ENCODE measurements at regions of chr4 and their contacts with region 1.

Region 1: DNA sequence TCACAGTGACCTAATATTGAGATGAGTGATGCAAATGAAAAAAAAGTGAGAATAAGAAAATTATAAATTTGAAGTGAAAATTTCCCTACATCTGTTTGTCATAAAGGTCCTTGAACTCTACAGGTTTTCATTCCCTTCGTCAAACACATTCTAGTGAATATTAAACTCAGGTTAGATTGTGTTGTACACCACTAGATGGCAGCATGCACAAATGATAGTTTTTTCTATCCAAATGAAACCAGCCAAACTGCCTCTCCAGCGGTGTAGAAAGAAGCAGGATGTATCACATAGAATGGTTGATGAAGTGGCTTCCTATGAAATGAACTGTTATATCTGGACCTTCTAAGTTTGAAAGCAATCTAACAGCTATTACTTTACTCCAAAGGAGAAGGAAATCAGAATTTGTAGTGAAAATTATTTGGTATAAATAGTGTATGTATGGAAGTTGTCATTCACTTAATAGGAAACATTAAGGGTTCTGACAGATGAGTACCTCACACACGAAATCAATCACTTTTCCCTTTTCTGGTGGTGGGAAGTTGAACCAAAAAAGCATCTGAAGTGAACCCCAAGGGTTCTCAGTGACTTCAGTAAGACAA is 382.7 kb downstream of the UNC5C start:
- DNase-seq: peak; percentile 17
- ATAC-seq: peak; percentile 82
- H3K4me3 ChIP-seq: no peak overlapping the region
- H3K27ac ChIP-seq: no peak overlapping the region
- H3K4me1 ChIP-seq: no peaks in the 10 kb centered on the region
- H3K27me3 ChIP-seq: no peaks in the 10 kb centered on the region
- CTCF ChIP-seq: peak; percentile 44 to 79 (median 50); a peak in 5 of 6 replicates
- EP300 ChIP-seq: no peak
- POLR2A ChIP-seq: no peak
- RAD21 ChIP-seq: peak; percentile 74

Region 2: GRCh38 chr4:94595879-94596483 is 570.0 kb before region 1 on chr4:
- CTCF ChIA-PET with region 1: no interaction called
- POLR2A ChIA-PET with region 1: no interaction called
- RAD21 ChIA-PET with region 1: no interaction called
- SMC1A ChIA-PET with region 1: no interaction called
- in situ Hi-C with region 1: no loop called
- intact Hi-C with region 1: no loop called
- DNase-seq: peak; percentile 8
- ATAC-seq: peak; percentile 78
- H3K4me3 ChIP-seq: no peak overlapping the region
- H3K27ac ChIP-seq: no peak overlapping the region
- H3K4me1 ChIP-seq: no peaks in the 10 kb centered on the region
- H3K27me3 ChIP-seq: no peaks in the 10 kb centered on the region
- CTCF ChIP-seq: peak; percentile 45 to 76 (median 53); a peak in 4 of 6 replicates
- EP300 ChIP-seq: no peak
- POLR2A ChIP-seq: no peak
- RAD21 ChIP-seq: peak; percentile 89

Region 3: DNA sequence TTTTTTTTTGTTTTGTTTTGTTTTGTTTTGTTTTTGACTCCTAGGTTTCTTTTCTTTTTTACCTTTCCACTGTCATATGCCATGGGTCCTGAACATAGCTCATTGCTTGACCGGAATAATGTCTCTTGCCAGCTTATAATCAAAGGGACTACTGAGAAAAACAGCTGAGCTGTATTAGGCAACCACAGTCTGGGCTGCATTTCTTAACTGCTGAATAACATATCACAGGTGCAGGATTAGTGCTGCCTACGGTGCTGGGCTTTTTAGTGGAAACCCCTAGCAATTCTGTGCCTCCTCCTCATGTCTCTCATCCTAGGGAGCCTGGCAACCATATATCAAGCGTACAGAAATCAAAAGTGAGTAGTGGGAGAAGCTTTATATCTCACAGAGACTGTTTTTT is 74.8 kb before region 1 on chr4:
- CTCF ChIA-PET with region 1: no interaction called
- POLR2A ChIA-PET with region 1: no interaction called
- RAD21 ChIA-PET with region 1: no interaction called
- SMC1A ChIA-PET with region 1: no interaction called
- in situ Hi-C with region 1: no loop called
- intact Hi-C with region 1: no loop called
- DNase-seq: no peak
- ATAC-seq: no peak
- H3K4me3 ChIP-seq: no peak overlapping the region
- H3K27ac ChIP-seq: no peak overlapping the region
- H3K4me1 ChIP-seq: no peaks in the 10 kb centered on the region
- H3K27me3 ChIP-seq: no peaks in the 10 kb centered on the region
- CTCF ChIP-seq: no peak
- EP300 ChIP-seq: no peak
- POLR2A ChIP-seq: no peak
- RAD21 ChIP-seq: no peak

Region 4: DNA sequence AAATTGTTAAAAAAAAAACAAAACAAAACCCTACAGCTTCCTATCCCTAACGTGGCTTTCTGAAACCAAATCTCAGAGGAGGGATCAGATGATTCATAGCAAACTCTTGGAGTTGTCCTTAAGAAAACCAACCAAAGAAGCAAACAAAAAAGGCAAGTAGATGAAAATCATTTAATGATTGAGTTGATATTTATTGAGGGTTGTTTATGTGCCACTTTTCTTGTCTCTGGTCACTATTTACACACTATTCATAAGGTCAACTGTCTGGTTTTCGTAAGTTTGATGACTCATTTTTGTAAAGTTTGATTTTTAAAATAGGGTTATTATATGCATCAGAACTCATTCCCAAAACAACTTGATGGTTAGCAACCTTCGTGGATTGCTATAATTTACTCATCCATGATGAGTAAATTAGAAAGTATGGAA is 249.3 kb after region 1 on chr4:
- CTCF ChIA-PET with region 1: no interaction called
- POLR2A ChIA-PET with region 1: no interaction called
- RAD21 ChIA-PET with region 1: no interaction called
- SMC1A ChIA-PET with region 1: no interaction called
- in situ Hi-C with region 1: no loop called
- intact Hi-C with region 1: loop called (anchors 5 kb)
- DNase-seq: no peak
- ATAC-seq: no peak
- H3K4me3 ChIP-seq: no peak overlapping the region
- H3K27ac ChIP-seq: no peak overlapping the region
- H3K4me1 ChIP-seq: no peaks in the 10 kb centered on the region
- H3K27me3 ChIP-seq: no peaks in the 10 kb centered on the region
- CTCF ChIP-seq: no peak
- EP300 ChIP-seq: no peak
- POLR2A ChIP-seq: no peak
- RAD21 ChIP-seq: no peak

Region 5: DNA sequence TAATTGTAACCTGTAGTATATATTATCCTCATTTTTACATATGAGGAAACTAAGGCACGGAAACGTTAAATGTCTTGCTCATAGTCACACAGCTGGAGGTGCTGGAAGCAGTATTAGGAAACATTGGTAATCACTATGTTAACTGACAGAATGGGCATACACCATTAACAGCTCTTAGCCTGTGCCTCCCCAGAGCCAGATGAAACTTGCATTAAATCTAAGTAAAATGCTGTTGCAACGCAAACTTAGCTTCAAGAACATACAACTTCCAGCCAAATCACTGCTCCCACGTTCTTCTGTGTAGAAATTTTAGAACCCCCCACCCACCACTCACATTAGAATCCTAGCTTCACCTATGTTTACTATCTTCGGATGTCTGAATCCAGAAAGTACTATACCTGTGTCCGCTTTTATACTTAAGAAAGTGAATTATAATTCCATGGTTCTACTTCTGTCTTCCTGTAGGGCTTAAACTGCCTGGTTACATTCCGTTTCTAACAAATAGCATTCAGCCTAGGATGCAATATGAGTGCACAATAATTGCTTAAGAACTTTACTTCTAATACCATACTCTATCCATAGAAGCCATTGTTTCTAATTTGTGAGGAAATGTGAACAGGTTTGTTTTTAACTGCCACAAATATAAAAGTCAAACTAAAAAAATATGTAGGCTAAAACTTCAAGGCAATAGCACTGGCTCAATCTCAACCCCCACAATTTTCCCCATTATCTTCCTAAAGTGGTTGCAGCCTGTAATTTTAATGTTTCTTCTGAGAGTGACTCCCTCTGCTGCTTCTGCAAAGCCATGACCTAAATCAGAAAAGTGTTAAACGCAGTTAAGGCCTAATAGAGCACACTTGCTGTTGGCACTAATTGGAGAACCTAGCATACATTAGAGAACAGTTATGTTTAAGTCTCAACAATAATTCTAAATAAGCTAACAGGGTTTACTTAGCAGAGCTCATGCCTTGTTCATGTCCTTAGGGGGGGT is 378.4 kb after region 1 on chr4:
- CTCF ChIA-PET with region 1: no interaction called
- POLR2A ChIA-PET with region 1: no interaction called
- RAD21 ChIA-PET with region 1: no interaction called
- SMC1A ChIA-PET with region 1: no interaction called
- in situ Hi-C with region 1: no loop called
- intact Hi-C with region 1: loop called (anchors 2 kb)
- DNase-seq: no peak
- ATAC-seq: peak; percentile 32
- H3K4me3 ChIP-seq: no peak overlapping the region
- H3K27ac ChIP-seq: no peak overlapping the region
- H3K4me1 ChIP-seq: no peaks in the 10 kb centered on the region
- H3K27me3 ChIP-seq: peaks cover 0 to 9% of the 10 kb centered on the region in 2 experiments; a peak in 1 of 4 replicates
- CTCF ChIP-seq: peak in 2 of 3 experiments; percentile 17 to 40; a peak in 1 of 6 replicates
- EP300 ChIP-seq: no peak
- POLR2A ChIP-seq: no peak
- RAD21 ChIP-seq: no peak

Region 6: DNA sequence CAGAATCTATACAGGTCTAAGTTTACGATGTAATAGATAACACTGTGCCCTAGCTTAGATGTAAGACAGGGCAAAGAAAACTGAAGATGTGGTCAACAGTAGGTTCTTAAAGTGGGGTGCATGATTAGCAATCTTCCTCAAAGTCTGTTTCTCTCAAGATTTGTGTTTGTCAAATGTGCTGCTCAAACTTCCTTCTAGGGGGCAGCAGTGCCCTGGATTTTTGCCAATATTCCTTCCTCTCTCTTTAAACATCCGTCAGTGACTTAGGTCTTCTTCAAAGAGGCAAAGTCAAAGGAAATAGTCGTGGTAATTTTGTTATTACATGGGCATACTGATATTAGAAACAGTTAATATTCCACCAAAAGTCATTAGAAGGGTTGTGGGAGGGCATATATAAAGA is 669.6 kb after region 1 on chr4:
- CTCF ChIA-PET with region 1: interaction called, 4 read pairs
- POLR2A ChIA-PET with region 1: no interaction called
- RAD21 ChIA-PET with region 1: no interaction called
- SMC1A ChIA-PET with region 1: interaction called, 3 read pairs
- in situ Hi-C with region 1: no loop called
- intact Hi-C with region 1: loop called (anchors 10 kb)
- DNase-seq: no peak
- ATAC-seq: peak; percentile 43
- H3K4me3 ChIP-seq: no peak overlapping the region
- H3K27ac ChIP-seq: no peak overlapping the region
- H3K4me1 ChIP-seq: no peaks in the 10 kb centered on the region
- H3K27me3 ChIP-seq: no peaks in the 10 kb centered on the region
- CTCF ChIP-seq: peak; percentile 3 to 41 (median 27); a peak in 1 of 6 replicates
- EP300 ChIP-seq: no peak
- POLR2A ChIP-seq: no peak
- RAD21 ChIP-seq: no peak

Region 7: DNA sequence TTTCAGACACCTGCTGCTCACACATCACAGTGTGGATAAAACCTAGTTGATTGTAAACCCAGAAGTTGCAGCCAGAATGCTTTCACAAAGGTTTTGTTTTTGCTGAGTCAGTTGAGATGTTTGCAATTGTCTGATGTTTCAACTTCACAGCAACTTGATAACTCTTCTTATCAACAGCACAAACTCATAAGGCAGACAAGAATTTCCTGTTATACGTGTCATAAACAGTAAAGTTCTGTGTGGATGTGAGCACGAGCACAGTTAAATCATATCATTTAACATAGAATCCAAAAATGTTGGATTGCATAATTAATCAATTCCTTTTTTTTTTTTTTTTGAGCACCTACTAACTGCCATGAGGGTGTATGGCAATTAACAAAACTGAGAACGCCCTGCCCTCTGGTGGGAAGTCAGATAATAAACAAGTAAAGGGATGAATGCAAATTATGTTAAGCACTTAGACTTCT is 1186.1 kb after region 1 on chr4:
- CTCF ChIA-PET with region 1: no interaction called
- POLR2A ChIA-PET with region 1: no interaction called
- RAD21 ChIA-PET with region 1: no interaction called
- SMC1A ChIA-PET with region 1: interaction called, 3 read pairs
- in situ Hi-C with region 1: loop called (anchors 10 kb)
- intact Hi-C with region 1: no loop called
- DNase-seq: no peak
- ATAC-seq: peak; percentile 68
- H3K4me3 ChIP-seq: no peak overlapping the region
- H3K27ac ChIP-seq: no peak overlapping the region
- H3K4me1 ChIP-seq: no peaks in the 10 kb centered on the region
- H3K27me3 ChIP-seq: no peaks in the 10 kb centered on the region
- CTCF ChIP-seq: peak; percentile 13 to 40 (median 13); a peak in 1 of 6 replicates
- EP300 ChIP-seq: no peak
- POLR2A ChIP-seq: no peak
- RAD21 ChIP-seq: peak; percentile 50; the same call in 1 of the 2 replicates

Measured in GM12878 (cell line).